ENCODE measurements at regions of chr19 and their contacts with region 1.

Region 1: GRCh38 chr19:5987077-5987818 is 9.3 kb upstream of the RANBP3 start:
- DNase-seq: peak; percentile 34
- H3K4me3 ChIP-seq: peak overlapping the region; percentile 42
- CTCF ChIP-seq: peak; percentile 72

Region 2: DNA sequence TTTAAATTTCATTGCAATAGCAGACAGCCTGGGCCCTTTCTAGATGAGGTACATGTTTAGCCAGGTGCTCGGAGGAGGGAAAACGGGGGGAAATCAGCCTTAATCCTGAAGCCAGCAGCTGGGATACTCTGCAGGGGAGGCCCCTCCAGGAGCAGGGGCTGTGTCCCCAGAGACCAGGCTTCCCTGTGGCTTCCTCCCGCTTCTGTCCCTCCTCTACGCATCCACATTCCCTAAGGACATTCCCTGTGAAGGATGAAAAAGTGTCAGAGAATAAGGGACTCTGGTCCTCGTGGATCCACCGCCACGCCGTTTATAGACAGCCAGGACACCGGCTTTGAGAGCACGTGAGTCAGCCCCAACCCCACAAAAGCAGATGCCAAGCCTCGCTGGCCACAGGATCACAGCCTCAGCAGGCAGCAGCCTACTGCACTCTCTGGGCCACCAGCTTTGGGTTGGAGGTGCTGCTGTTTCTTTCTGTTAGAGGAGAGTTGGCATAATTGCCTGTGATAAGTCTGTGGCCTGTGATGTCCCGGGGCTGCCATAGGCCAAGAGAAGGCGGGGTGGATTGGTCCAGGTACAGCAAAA is 27.4 kb after region 1 on chr19:
- CTCF ChIA-PET with region 1: interaction called, 27 read pairs
- POLR2A ChIA-PET with region 1: no interaction called
- DNase-seq: no peak
- H3K4me3 ChIP-seq: no peak overlapping the region
- CTCF ChIP-seq: no peak

Region 3: DNA sequence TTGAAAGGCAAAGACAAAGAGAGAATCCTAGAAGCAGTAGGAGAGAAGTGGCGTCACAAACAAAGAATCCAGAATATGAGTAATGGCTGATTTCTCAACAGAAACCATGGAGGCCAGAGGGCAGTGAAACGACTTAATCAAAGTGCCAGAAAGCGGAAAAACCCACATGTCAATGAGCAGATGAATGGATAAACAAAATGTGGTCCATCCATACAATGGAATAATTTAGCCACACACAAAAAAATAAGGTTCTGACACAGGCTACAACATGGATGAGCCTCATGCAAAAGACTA is 42.9 kb after region 1 on chr19:
- CTCF ChIA-PET with region 1: interaction called, 15 read pairs
- POLR2A ChIA-PET with region 1: no interaction called
- DNase-seq: no peak
- H3K4me3 ChIP-seq: no peak overlapping the region
- CTCF ChIP-seq: no peak